ENCODE measurements at regions of chr19 and their contacts with region 1.

Region 1: GRCh38 chr19:40425450-40426287 is at the start of gene SERTAD1:
- DNase-seq: peak; percentile 100
- H3K4me3 Mint-ChIP-seq: peak within 1 kb of the TSS; percentile 89
- H3K27ac Mint-ChIP-seq: peak within 1 kb of the TSS; percentile 97
- H3K4me1 Mint-ChIP-seq: peaks cover 21% of the 10 kb centered on the region
- H3K27me3 Mint-ChIP-seq: no peaks in the 10 kb centered on the region
- total RNA-seq, gene SERTAD1: 8.8 to 9.2 TPM

Region 2: GRCh38 chr19:39397360-39398296 is 1028.0 kb before region 1 on chr19:
- CTCF ChIA-PET with region 1: no interaction called
- intact Hi-C with region 1: loop called (anchors 5 kb)
- DNase-seq: peak; percentile 96
- H3K4me3 Mint-ChIP-seq: peak overlapping the region; percentile 34
- H3K27ac Mint-ChIP-seq: peak overlapping the region; percentile 91
- H3K4me1 Mint-ChIP-seq: peaks cover 63% of the 10 kb centered on the region
- H3K27me3 Mint-ChIP-seq: no peaks in the 10 kb centered on the region

Region 3: GRCh38 chr19:40356681-40357595 is 68.7 kb before region 1 on chr19:
- CTCF ChIA-PET with region 1: interaction called, 11 read pairs
- intact Hi-C with region 1: no loop called
- DNase-seq: no peak
- H3K4me3 Mint-ChIP-seq: no peak overlapping the region
- H3K27ac Mint-ChIP-seq: no peak overlapping the region
- H3K4me1 Mint-ChIP-seq: peaks cover 6% of the 10 kb centered on the region
- H3K27me3 Mint-ChIP-seq: no peaks in the 10 kb centered on the region

Region 4: DNA sequence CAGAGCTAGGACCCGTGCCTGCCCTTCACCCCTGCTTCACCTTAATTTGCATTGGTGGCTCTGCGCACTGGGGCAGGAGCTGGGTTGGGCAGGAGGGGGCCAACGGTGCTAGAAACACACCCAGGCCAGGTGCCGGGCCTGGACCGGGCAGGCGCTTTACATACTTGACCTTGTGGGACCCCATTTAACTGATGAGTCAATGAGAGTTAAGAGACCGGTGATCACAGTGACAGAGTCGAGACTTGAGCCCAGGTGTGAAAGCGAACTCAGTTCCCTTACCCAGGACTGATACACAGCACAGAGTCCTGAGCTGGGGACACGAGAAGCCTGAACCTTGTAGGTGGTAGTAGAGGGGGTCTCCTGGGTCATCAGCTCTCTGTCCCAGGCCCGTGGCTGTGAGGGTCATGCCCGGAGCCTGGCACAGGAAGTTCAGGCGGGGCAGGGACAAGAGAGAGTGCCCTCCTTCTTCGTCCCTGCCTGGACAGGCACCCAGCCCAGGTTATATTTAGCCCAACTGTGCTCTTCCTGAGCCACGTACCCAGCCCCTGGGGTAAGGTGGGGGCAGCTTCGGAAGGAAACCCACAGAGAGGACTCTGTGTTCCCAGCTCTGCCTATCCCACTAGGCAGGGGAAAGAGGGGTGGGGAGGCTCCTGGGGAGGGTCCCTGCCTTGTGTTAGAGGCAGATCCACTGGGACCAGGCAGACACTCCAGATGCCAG is 14.4 kb before region 1 on chr19:
- CTCF ChIA-PET with region 1: interaction called, 14 read pairs
- intact Hi-C with region 1: no loop called
- DNase-seq: no peak
- H3K4me3 Mint-ChIP-seq: no peak overlapping the region
- H3K27ac Mint-ChIP-seq: no peak overlapping the region
- H3K4me1 Mint-ChIP-seq: peaks cover 2% of the 10 kb centered on the region
- H3K27me3 Mint-ChIP-seq: no peaks in the 10 kb centered on the region

Region 5: GRCh38 chr19:40609561-40610395 is 184.1 kb after region 1 on chr19:
- CTCF ChIA-PET with region 1: no interaction called
- intact Hi-C with region 1: loop called (anchors 2 kb)
- DNase-seq: peak; percentile 97
- H3K4me3 Mint-ChIP-seq: peak overlapping the region; percentile 89
- H3K27ac Mint-ChIP-seq: peak overlapping the region; percentile 91
- H3K4me1 Mint-ChIP-seq: peaks cover 67% of the 10 kb centered on the region
- H3K27me3 Mint-ChIP-seq: no peaks in the 10 kb centered on the region